MCF 10A (cell line): ENCODE measurements at regions of chr4 and their contacts with region 1.

Region 1: DNA sequence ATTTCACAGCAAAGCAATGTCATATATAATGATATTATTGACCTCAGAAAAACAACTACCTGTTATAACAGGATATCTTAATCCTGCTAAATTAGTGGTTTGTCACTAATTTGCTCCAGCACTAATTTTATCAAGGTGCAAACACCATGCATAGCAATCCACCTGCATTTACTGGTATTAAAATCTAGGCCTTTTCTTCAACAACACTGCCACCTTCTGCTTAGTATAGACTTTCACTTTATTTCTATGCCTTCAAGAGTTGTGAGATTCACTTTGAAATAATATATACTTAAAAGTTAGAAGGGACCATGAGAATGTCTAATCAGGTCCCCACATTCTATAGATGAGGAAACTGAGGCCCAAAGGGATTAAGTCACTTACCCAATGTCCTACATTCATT is 82.1 kb upstream of the IQCM start:
- DNase-seq: peak; percentile 47
- H3K4me3 Mint-ChIP-seq: no peak overlapping the region
- H3K27ac Mint-ChIP-seq: no peak overlapping the region
- H3K4me1 Mint-ChIP-seq: no peaks in the 10 kb centered on the region
- H3K27me3 Mint-ChIP-seq: no peaks in the 10 kb centered on the region
- CTCF ChIP-seq: peak; percentile 55

Region 2: GRCh38 chr4:148441986-148442831 is 1455.6 kb before region 1 on chr4 and contains the start of gene NR3C2:
- CTCF ChIA-PET with region 1: no interaction called
- POLR2A ChIA-PET with region 1: no interaction called
- intact Hi-C with region 1: loop called (anchors 5 kb)
- DNase-seq: peak; percentile 99
- H3K4me3 Mint-ChIP-seq: peak within 1 kb of the TSS; percentile 98
- H3K27ac Mint-ChIP-seq: no peak within 1 kb of the TSS
- H3K4me1 Mint-ChIP-seq: peaks cover 15% of the 10 kb centered on the region
- H3K27me3 Mint-ChIP-seq: peaks cover 18% of the 10 kb centered on the region
- CTCF ChIP-seq: no peak
- total RNA-seq, gene NR3C2: 0.21 and 0.34 TPM in 2 replicates

Region 3: GRCh38 chr4:149264093-149264733 is 633.6 kb before region 1 on chr4:
- CTCF ChIA-PET with region 1: no interaction called
- POLR2A ChIA-PET with region 1: no interaction called
- intact Hi-C with region 1: loop called (anchors 1 kb)
- DNase-seq: peak; percentile 80
- H3K4me3 Mint-ChIP-seq: no peak overlapping the region
- H3K27ac Mint-ChIP-seq: no peak overlapping the region
- H3K4me1 Mint-ChIP-seq: no peaks in the 10 kb centered on the region
- H3K27me3 Mint-ChIP-seq: no peaks in the 10 kb centered on the region
- CTCF ChIP-seq: peak; percentile 78

Region 4: GRCh38 chr4:149403081-149403480 is 494.7 kb before region 1 on chr4:
- CTCF ChIA-PET with region 1: no interaction called
- POLR2A ChIA-PET with region 1: no interaction called
- intact Hi-C with region 1: no loop called
- DNase-seq: no peak
- H3K4me3 Mint-ChIP-seq: no peak overlapping the region
- H3K27ac Mint-ChIP-seq: no peak overlapping the region
- H3K4me1 Mint-ChIP-seq: no peaks in the 10 kb centered on the region
- H3K27me3 Mint-ChIP-seq: no peaks in the 10 kb centered on the region
- CTCF ChIP-seq: no peak

Region 5: GRCh38 chr4:149441338-149441737 is 456.4 kb before region 1 on chr4:
- CTCF ChIA-PET with region 1: no interaction called
- POLR2A ChIA-PET with region 1: no interaction called
- intact Hi-C with region 1: loop called (anchors 10 kb)
- DNase-seq: peak; percentile 1
- H3K4me3 Mint-ChIP-seq: no peak overlapping the region
- H3K27ac Mint-ChIP-seq: no peak overlapping the region
- H3K4me1 Mint-ChIP-seq: no peaks in the 10 kb centered on the region
- H3K27me3 Mint-ChIP-seq: no peaks in the 10 kb centered on the region
- CTCF ChIP-seq: no peak

Region 6: DNA sequence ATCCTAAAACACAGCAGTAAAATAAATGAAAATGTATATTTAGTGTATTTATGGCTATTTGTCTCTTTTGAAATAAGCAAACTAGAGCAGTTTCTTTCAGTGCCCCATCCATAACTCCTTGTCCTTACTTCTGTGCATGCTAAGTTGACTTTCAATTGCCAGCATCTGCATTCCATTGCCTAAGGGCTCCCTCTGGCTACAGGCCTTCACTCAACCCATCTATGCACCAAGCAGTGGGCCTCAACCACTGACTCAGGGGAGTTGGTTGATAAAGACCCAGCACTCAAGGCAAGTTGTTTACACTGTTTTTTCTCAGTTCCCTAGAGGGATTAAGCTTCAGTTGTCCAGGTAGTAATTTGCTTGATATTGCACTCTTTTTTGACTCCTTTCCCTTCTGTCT is 347.9 kb before region 1 on chr4:
- CTCF ChIA-PET with region 1: no interaction called
- POLR2A ChIA-PET with region 1: no interaction called
- intact Hi-C with region 1: loop called (anchors 10 kb)
- DNase-seq: peak; percentile 26
- H3K4me3 Mint-ChIP-seq: no peak overlapping the region
- H3K27ac Mint-ChIP-seq: no peak overlapping the region
- H3K4me1 Mint-ChIP-seq: no peaks in the 10 kb centered on the region
- H3K27me3 Mint-ChIP-seq: no peaks in the 10 kb centered on the region
- CTCF ChIP-seq: no peak

Region 7: GRCh38 chr4:149708513-149709175 is 189.1 kb before region 1 on chr4:
- CTCF ChIA-PET with region 1: interaction called, 3 read pairs
- POLR2A ChIA-PET with region 1: no interaction called
- intact Hi-C with region 1: loop called (anchors 10 kb)
- DNase-seq: peak; percentile 73
- H3K4me3 Mint-ChIP-seq: no peak overlapping the region
- H3K27ac Mint-ChIP-seq: peak overlapping the region; percentile 76
- H3K4me1 Mint-ChIP-seq: peaks cover 13% of the 10 kb centered on the region
- H3K27me3 Mint-ChIP-seq: no peaks in the 10 kb centered on the region
- CTCF ChIP-seq: no peak

Region 8: GRCh38 chr4:149870008-149870407 is 27.8 kb before region 1 on chr4:
- CTCF ChIA-PET with region 1: no interaction called
- POLR2A ChIA-PET with region 1: no interaction called
- intact Hi-C with region 1: no loop called
- DNase-seq: no peak
- H3K4me3 Mint-ChIP-seq: no peak overlapping the region
- H3K27ac Mint-ChIP-seq: no peak overlapping the region
- H3K4me1 Mint-ChIP-seq: no peaks in the 10 kb centered on the region
- H3K27me3 Mint-ChIP-seq: no peaks in the 10 kb centered on the region
- CTCF ChIP-seq: no peak